ENCODE measurements at regions of chr11 and their contacts with region 1.

Region 1: GRCh38 chr11:66638177-66639065 is at the start of gene RBM4:
- DNase-seq: peak; percentile 97
- H3K4me3 Mint-ChIP-seq: peak within 1 kb of the TSS; percentile 96
- H3K27ac Mint-ChIP-seq: peak within 1 kb of the TSS; percentile 96
- H3K4me1 Mint-ChIP-seq: peaks cover 68% of the 10 kb centered on the region
- H3K27me3 Mint-ChIP-seq: no peaks in the 10 kb centered on the region
- total RNA-seq, gene RBM4: 131 and 133 TPM in 2 replicates

Region 2: DNA sequence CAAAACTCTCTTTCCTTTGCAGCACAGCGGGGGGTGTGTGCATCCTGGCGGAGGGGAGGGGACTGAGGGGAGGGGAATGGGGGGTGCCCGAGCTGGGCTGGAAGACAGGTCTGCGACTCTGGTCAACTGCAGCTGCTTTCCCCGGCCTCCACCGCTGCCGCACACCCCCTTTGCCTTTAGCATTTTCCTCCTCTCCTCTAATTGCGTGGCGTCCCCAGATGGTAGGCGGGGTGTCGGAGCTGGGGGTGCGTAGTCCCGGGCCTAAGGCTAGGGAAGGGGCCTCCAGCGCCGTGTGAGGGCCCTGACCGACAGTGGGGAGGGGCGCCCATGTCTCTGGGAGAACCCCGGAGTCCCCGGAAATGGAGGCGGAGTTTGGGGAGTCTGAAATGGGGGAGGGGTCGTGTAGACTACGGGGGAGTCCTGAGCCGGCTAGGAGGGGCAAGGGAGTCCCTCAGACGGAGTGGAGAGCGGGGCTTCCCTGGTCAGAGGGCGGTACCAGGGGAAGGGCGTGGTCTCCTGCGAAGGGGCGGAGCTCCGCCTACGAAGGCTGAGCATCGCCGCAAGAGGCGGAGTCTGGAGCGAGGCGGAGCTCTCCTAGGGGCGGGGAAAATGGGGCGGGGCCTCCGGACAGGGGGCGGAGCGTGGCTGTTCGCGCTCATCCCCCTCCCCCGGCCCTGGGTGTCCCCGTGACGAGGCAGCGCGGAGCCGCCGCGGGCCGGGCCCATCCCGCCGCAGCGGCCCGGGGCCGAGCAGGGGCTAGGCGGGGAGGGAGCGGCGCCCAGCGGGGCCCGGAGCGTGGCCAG is 172.0 kb before region 1 on chr11 and contains the start of gene PELI3:
- intact Hi-C with region 1: loop called (anchors 1 kb)
- DNase-seq: peak; percentile 86
- H3K4me3 Mint-ChIP-seq: peak within 1 kb of the TSS; percentile 94
- H3K27ac Mint-ChIP-seq: peak within 1 kb of the TSS; percentile 88
- H3K4me1 Mint-ChIP-seq: peaks cover 28% of the 10 kb centered on the region
- H3K27me3 Mint-ChIP-seq: no peaks in the 10 kb centered on the region
- total RNA-seq, gene PELI3: 15.3 and 15.8 TPM in 2 replicates

Region 3: GRCh38 chr11:66579017-66579606 is 59.3 kb before region 1 on chr11:
- intact Hi-C with region 1: loop called (anchors 1 kb)
- DNase-seq: peak; percentile 53
- H3K4me3 Mint-ChIP-seq: no peak overlapping the region
- H3K27ac Mint-ChIP-seq: peak overlapping the region; percentile 9
- H3K4me1 Mint-ChIP-seq: peaks cover 14% of the 10 kb centered on the region
- H3K27me3 Mint-ChIP-seq: peaks cover 15% of the 10 kb centered on the region

Region 4: DNA sequence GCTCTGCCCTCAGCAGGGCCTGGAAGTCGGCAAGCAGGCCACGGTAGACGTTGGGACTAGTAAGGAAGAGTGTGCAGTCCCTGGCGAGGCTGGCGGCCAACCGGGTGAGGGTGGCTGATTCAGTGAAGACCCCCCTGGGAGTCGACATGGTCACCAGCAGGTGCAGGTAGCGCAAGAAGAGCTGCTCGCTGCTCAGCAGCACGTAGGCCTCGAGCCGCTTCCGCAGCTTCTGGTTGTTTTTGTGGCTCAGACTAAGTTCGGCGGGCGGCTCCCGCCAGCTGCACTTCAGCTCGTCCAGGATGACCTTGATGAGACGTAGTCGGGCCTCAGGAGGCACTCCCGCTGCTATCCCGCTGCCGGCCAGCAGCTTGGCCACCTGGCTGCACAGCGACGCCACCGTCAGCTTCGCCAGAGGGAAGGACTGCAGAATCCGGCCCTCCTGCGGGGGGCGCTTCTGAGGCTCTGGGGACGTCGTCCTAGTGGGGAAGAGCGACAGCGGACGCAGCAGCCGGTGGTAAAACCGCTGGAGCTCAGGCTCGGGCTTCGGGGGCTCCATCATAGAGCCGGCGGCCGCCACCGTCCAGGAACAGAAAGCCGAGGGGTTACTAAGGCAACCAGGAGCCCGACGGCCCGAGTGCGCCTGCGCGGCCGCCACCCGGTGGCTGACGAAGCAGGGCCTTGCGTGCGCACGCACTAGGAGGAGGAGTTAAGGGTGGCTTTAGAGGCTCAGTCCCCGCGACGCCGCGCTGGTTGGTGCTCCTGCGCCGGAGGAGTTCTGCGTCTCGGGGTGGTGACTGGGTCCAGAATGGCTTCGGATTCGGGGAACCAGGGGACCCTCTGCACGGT is 45.7 kb before region 1 on chr11 and contains the starts of genes CCDC87 and CCS:
- intact Hi-C with region 1: loop called (anchors 1 kb)
- DNase-seq: peak; percentile 96
- H3K4me3 Mint-ChIP-seq: peak within 1 kb of the TSS; percentile 100
- H3K27ac Mint-ChIP-seq: peak within 1 kb of the TSS; percentile 97
- H3K4me1 Mint-ChIP-seq: peaks cover 30% of the 10 kb centered on the region
- H3K27me3 Mint-ChIP-seq: no peaks in the 10 kb centered on the region
- total RNA-seq, gene CCDC87: 0.29 and 0.37 TPM in 2 replicates
- total RNA-seq, gene CCS: 25.3 and 32.1 TPM in 2 replicates

Measured in activated T-helper 1 cell treated with anti-CD3 and anti-CD28 coated beads, Interleukin-12 subunit alpha, Interleukin-12 subunit beta, Interleukin-2, Interleukin-4 antibody, amounts not matched to agents 30 ng/mL and 10 ng/mL and 1 ng/mL, durations not matched to agents 14 hours and 24 hours and 36 hours (primary cell).